Activated T-helper 1 cell treated with anti-CD3 and anti-CD28 coated beads, Interleukin-12 subunit alpha, Interleukin-12 subunit beta, Interleukin-2, Interleukin-4 antibody, amounts not matched to agents 30 ng/mL and 10 ng/mL and 1 ng/mL, durations not matched to agents 14 hours and 24 hours and 36 hours (primary cell): ENCODE measurements at regions of chr13 and their contacts with region 1.

Region 1: GRCh38 chr13:34805347-34805746 is 136.7 kb upstream of the NBEA start:
- DNase-seq: no peak
- H3K4me3 Mint-ChIP-seq: no peak overlapping the region
- H3K27ac Mint-ChIP-seq: no peak overlapping the region
- H3K4me1 Mint-ChIP-seq: no peaks in the 10 kb centered on the region
- H3K27me3 Mint-ChIP-seq: no peaks in the 10 kb centered on the region

Region 2: DNA sequence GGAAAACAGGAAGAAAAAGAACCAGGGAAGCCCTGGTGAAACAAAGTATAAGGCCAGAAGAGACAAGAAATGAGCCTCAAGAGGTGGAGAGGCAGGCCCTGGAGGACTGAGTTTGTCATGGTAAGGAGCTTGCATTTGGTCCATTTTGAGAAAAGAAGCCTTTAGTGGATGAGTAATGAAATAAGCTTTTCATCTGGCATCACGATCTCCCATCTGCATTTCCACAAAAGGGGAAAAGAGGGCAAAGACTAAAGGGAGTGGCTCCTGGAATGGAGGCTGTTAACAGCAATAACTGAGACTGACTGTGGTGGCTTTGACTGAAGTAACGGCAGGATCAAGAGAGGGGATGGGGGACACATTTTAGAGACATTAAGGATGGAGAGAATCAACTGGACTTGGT is 12.0 kb before region 1 on chr13:
- intact Hi-C with region 1: no loop called
- DNase-seq: no peak
- H3K4me3 Mint-ChIP-seq: no peak overlapping the region
- H3K27ac Mint-ChIP-seq: no peak overlapping the region
- H3K4me1 Mint-ChIP-seq: no peaks in the 10 kb centered on the region
- H3K27me3 Mint-ChIP-seq: no peaks in the 10 kb centered on the region

Region 3: GRCh38 chr13:34857558-34858325 is 52.4 kb after region 1 on chr13:
- intact Hi-C with region 1: loop called (anchors 2 kb)
- DNase-seq: no peak
- H3K4me3 Mint-ChIP-seq: no peak overlapping the region
- H3K27ac Mint-ChIP-seq: no peak overlapping the region
- H3K4me1 Mint-ChIP-seq: no peaks in the 10 kb centered on the region
- H3K27me3 Mint-ChIP-seq: no peaks in the 10 kb centered on the region